Vagina (tissue), 2 donors: ENCODE measurements at regions of chr10 and their contacts with region 1.

Region 1: DNA sequence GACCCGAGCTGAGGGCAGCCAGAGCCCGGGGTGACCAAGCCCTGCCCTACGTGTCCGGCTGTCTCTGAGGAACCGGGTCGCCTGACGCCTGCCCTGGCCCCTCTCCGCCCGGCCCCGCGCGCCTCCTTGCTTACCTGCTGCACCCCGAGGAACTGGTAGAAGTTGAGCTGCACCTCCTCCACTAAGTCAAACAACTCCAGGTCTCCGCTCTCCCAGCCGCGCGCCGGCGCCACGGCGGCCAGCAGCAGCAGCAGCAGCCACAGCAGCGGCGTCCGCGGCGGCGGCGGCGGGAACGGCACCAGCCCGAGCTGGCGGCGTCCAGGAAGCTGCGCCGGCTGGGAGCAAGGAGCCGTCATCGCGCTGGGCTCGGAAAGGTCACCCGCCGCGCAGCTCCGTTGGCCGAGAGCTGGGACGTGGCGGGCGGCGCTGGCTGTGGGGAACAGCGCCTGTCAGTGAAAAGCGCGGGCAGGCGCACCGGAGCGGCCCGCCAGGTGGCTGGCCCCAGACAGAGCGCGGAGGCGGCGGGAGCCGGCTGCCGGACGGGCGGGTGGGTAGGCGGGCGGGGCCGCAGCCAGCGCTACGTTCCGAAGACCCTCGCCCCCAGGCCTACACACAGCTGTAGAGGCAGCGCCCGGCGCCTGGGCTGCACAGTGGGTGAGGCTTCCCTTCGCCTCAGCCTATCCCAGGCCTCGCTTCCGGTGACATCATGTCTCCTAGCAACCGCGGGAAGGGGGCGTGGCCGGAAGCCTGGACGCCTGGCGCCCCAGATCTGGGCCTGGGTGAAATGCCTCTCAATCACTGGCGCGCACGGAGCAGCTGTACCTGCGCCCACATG is at the start of gene DNAJC1:
- DNase-seq: peak in 1 of 2 donors; percentile 97
- H3K4me3 ChIP-seq: peak within 1 kb of the TSS; percentile 63 to 85
- H3K27ac ChIP-seq: peak within 1 kb of the TSS; percentile 93
- H3K4me1 ChIP-seq: peaks cover 23% of the 10 kb centered on the region
- H3K27me3 ChIP-seq: no peaks in the 10 kb centered on the region
- CTCF ChIP-seq: no peak
- POLR2A ChIP-seq: peak in 1 of 2 donors; percentile 88
- total RNA-seq, gene DNAJC1: 40.0 TPM

Region 2: GRCh38 chr10:22316285-22317120 is 313.2 kb after region 1 on chr10 and contains the start of gene COMMD3:
- intact Hi-C with region 1: loop called (anchors 1 kb)
- DNase-seq: peak in 1 of 2 donors; percentile 94
- H3K4me3 ChIP-seq: peak within 1 kb of the TSS; percentile 80 to 86
- H3K27ac ChIP-seq: peak within 1 kb of the TSS; percentile 95
- H3K4me1 ChIP-seq: peaks cover 33% of the 10 kb centered on the region
- H3K27me3 ChIP-seq: no peaks in the 10 kb centered on the region
- CTCF ChIP-seq: no peak
- POLR2A ChIP-seq: peak in 1 of 2 donors; percentile 54
- total RNA-seq, gene COMMD3: 27.0 TPM

Region 3: DNA sequence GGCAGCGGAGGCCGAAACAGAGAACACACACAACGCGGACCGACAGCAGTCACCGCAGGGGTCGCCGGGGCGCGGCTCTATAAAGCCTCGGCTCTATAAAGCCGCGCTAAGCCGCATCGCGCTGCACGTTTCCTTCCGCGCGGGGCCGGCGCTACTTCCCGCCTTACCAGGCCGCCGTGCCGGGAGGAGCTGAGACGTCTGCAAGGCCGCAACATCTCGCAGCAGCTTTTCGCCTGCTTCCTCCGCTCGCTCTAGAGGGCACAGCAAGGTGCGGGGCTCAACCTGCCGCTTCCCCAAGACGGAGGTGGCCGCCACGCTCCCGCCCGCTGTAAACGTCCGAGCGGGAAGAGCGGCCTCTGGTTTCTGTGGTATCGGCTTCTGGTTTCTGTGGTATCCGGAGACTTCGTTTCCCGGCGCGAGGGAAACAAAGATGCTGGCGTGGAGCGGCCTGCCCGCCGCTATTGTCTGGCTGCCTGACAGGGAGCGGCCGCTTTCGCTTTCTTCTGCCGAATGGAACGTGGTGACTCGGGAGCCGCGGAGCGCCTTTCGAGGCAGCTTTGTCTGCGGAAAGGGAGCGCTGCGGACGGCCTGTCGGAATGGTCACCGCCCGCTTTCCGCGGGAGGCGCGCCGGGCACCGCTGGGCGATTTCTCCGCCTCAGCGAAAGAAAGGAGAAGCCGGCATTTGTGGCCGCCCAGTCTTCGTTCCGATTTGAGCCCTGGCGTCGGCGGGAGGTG is 433.8 kb after region 1 on chr10:
- intact Hi-C with region 1: loop called (anchors 5 kb)
- DNase-seq: no peak
- H3K4me3 ChIP-seq: peak overlapping the region; percentile 62 to 67
- H3K27ac ChIP-seq: peak overlapping the region; percentile 90
- H3K4me1 ChIP-seq: peaks cover 29% of the 10 kb centered on the region
- H3K27me3 ChIP-seq: no peaks in the 10 kb centered on the region
- CTCF ChIP-seq: no peak
- POLR2A ChIP-seq: peak in 1 of 2 donors; percentile 78